Activated T-helper 1 cell treated with anti-CD3 and anti-CD28 coated beads, Interleukin-12 subunit alpha, Interleukin-12 subunit beta, Interleukin-2, Interleukin-4 antibody, amounts not matched to agents 30 ng/mL and 10 ng/mL and 1 ng/mL, durations not matched to agents 14 hours and 24 hours and 36 hours (primary cell): ENCODE measurements at regions of chr5 and their contacts with region 1.

Region 1: GRCh38 chr5:176537608-176538504 is 654 bp upstream of the RNF44 start:
- DNase-seq: peak; percentile 97
- H3K4me3 Mint-ChIP-seq: peak overlapping the region; percentile 96
- H3K27ac Mint-ChIP-seq: peak overlapping the region; percentile 97
- H3K4me1 Mint-ChIP-seq: peaks cover 72% of the 10 kb centered on the region
- H3K27me3 Mint-ChIP-seq: no peaks in the 10 kb centered on the region

Region 2: GRCh38 chr5:175657593-175658271 is 880.1 kb before region 1 on chr5 and contains the start of gene HRH2:
- intact Hi-C with region 1: loop called (anchors 2 kb)
- DNase-seq: peak; percentile 62
- H3K4me3 Mint-ChIP-seq: peak within 1 kb of the TSS; percentile 98
- H3K27ac Mint-ChIP-seq: peak within 1 kb of the TSS; percentile 96
- H3K4me1 Mint-ChIP-seq: peaks cover 87% of the 10 kb centered on the region
- H3K27me3 Mint-ChIP-seq: peaks cover 2% of the 10 kb centered on the region
- total RNA-seq, gene HRH2: 94.7 and 96.9 TPM in 2 replicates

Region 3: GRCh38 chr5:176415952-176416924 is 121.6 kb before region 1 on chr5 and contains the start of gene CLTB:
- intact Hi-C with region 1: loop called (anchors 1 kb)
- DNase-seq: peak; percentile 76
- H3K4me3 Mint-ChIP-seq: peak within 1 kb of the TSS; percentile 84
- H3K27ac Mint-ChIP-seq: peak within 1 kb of the TSS; percentile 44
- H3K4me1 Mint-ChIP-seq: peaks cover 38% of the 10 kb centered on the region
- H3K27me3 Mint-ChIP-seq: peaks cover 14% of the 10 kb centered on the region
- total RNA-seq, gene CLTB: 71.6 and 84.0 TPM in 2 replicates

Region 4: GRCh38 chr5:176647030-176647866 is 109.4 kb after region 1 on chr5 and contains the start of gene TSPAN17:
- intact Hi-C with region 1: loop called (anchors 1 kb)
- DNase-seq: peak; percentile 99
- H3K4me3 Mint-ChIP-seq: peak within 1 kb of the TSS; percentile 88
- H3K27ac Mint-ChIP-seq: peak within 1 kb of the TSS; percentile 93
- H3K4me1 Mint-ChIP-seq: peaks cover 49% of the 10 kb centered on the region
- H3K27me3 Mint-ChIP-seq: no peaks in the 10 kb centered on the region
- total RNA-seq, gene TSPAN17: 34.1 and 35.3 TPM in 2 replicates

Region 5: GRCh38 chr5:177133091-177133852 is 595.4 kb after region 1 on chr5 and contains the start of gene NSD1:
- intact Hi-C with region 1: loop called (anchors 1 kb)
- DNase-seq: peak; percentile 90
- H3K4me3 Mint-ChIP-seq: peak within 1 kb of the TSS; percentile 93
- H3K27ac Mint-ChIP-seq: peak within 1 kb of the TSS; percentile 86
- H3K4me1 Mint-ChIP-seq: peaks cover 48% of the 10 kb centered on the region
- H3K27me3 Mint-ChIP-seq: no peaks in the 10 kb centered on the region
- total RNA-seq, gene NSD1: 108 and 112 TPM in 2 replicates

Region 6: GRCh38 chr5:177425801-177426565 is 888.1 kb after region 1 on chr5:
- intact Hi-C with region 1: loop called (anchors 1 kb)
- DNase-seq: peak; percentile 99
- H3K4me3 Mint-ChIP-seq: peak overlapping the region; percentile 86
- H3K27ac Mint-ChIP-seq: peak overlapping the region; percentile 94
- H3K4me1 Mint-ChIP-seq: peaks cover 51% of the 10 kb centered on the region
- H3K27me3 Mint-ChIP-seq: no peaks in the 10 kb centered on the region